ENCODE measurements at regions of chr12 and their contacts with region 1.

Region 1: GRCh38 chr12:48851883-48852733 is at the start of gene DDX23:
- DNase-seq: peak; percentile 93
- ATAC-seq: peak; percentile 99
- H3K4me3 Mint-ChIP-seq: peak within 1 kb of the TSS; percentile 94
- H3K27ac Mint-ChIP-seq: peak within 1 kb of the TSS; percentile 95
- H3K4me1 Mint-ChIP-seq: peaks cover 20% of the 10 kb centered on the region
- H3K27me3 Mint-ChIP-seq: no peaks in the 10 kb centered on the region
- CTCF ChIP-seq: no peak
- total RNA-seq, gene DDX23: 91.1 to 107 TPM (median 93.4 TPM) in 3 replicates

Region 2: GRCh38 chr12:48712209-48712608 is 139.9 kb before region 1 on chr12:
- CTCF ChIA-PET with region 1: no interaction called
- POLR2A ChIA-PET with region 1: no interaction called
- DNase-seq: no peak
- ATAC-seq: no peak
- H3K4me3 Mint-ChIP-seq: no peak overlapping the region
- H3K27ac Mint-ChIP-seq: no peak overlapping the region
- H3K4me1 Mint-ChIP-seq: peaks cover 12% of the 10 kb centered on the region
- H3K27me3 Mint-ChIP-seq: no peaks in the 10 kb centered on the region
- CTCF ChIP-seq: no peak

Region 3: GRCh38 chr12:48814262-48815125 is 37.6 kb before region 1 on chr12:
- CTCF ChIA-PET with region 1: interaction called, 25 read pairs
- POLR2A ChIA-PET with region 1: interaction called, 3 read pairs
- DNase-seq: peak; percentile 81
- ATAC-seq: peak; percentile 25
- H3K4me3 Mint-ChIP-seq: peak overlapping the region; percentile 87
- H3K27ac Mint-ChIP-seq: no peak overlapping the region
- H3K4me1 Mint-ChIP-seq: peaks cover 45% of the 10 kb centered on the region
- H3K27me3 Mint-ChIP-seq: peaks cover 69% of the 10 kb centered on the region
- CTCF ChIP-seq: peak; percentile 92

Region 4: DNA sequence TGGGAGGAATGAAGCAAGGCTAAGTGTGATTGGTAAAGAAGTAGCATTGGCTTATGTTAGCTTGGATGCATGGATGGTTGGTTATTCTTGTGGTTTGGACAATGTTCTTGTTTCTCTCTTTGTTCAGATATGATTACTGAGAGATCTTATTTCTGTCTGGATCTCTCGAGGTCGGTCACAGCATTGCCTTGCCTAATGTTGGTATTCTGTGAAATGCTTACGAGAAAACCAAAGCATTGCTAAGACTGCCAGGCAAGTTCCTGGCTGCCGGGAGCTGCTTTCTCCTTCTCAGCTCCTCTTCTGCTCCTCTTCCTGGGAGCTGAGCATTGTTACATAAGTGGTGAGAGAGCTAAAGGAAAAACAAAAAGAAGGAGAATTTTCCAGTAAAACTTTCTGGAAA is 21.0 kb after region 1 on chr12:
- CTCF ChIA-PET with region 1: interaction called, 134 read pairs
- POLR2A ChIA-PET with region 1: interaction called, 4 read pairs
- DNase-seq: no peak
- ATAC-seq: no peak
- H3K4me3 Mint-ChIP-seq: no peak overlapping the region
- H3K27ac Mint-ChIP-seq: no peak overlapping the region
- H3K4me1 Mint-ChIP-seq: no peaks in the 10 kb centered on the region
- H3K27me3 Mint-ChIP-seq: no peaks in the 10 kb centered on the region; the same call in 1 of the 2 replicates
- CTCF ChIP-seq: no peak

Region 5: DNA sequence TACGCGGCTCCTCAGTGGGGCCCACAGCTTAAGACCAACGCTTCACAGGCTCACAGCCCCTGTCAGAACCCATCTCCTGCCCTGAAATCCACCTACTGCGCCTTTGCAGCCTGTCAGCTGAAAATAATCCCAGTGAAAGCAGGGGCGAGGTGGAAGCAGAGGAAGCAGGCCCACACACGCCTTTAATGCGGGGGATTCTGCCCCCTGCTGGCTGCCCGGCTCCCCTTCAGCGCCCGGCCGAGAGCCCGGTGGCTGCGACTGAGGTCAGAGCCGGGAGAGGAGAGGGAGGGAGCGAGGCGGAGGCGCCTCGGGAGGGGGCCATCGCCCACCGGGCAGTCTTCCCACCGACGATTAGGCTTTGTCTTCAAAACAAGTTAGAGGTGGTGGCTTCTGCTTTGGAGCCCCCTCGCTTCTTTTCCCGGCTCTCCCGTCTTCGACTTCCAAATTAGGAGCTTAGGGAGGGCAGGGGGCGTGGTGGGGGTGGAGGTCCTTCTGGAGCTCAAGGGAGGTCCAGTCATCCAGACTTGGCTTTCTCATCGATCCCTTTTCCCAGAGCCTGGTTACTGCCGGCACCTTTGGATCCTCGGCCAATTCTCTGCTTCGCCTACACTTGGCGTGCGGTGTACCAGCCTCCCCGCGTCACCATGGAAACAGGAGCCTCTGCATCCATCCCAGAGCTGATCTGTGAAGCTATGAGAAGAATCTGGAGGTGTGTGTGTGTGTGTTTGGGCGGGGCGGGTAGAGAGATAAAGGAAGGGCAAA is 38.7 kb after region 1 on chr12:
- CTCF ChIA-PET with region 1: interaction called, 352 read pairs
- POLR2A ChIA-PET with region 1: interaction called, 20 read pairs
- DNase-seq: peak; percentile 92
- ATAC-seq: peak; percentile 95
- H3K4me3 Mint-ChIP-seq: peak overlapping the region; percentile 70
- H3K27ac Mint-ChIP-seq: no peak overlapping the region
- H3K4me1 Mint-ChIP-seq: peaks cover 7% of the 10 kb centered on the region
- H3K27me3 Mint-ChIP-seq: peaks cover 28% of the 10 kb centered on the region
- CTCF ChIP-seq: peak; percentile 92

Region 6: GRCh38 chr12:48924617-48925303 is 72.7 kb after region 1 on chr12:
- CTCF ChIA-PET with region 1: interaction called, 35 read pairs
- POLR2A ChIA-PET with region 1: interaction called, 4 read pairs
- DNase-seq: peak; percentile 69
- ATAC-seq: peak; percentile 69
- H3K4me3 Mint-ChIP-seq: peak overlapping the region; percentile 82
- H3K27ac Mint-ChIP-seq: peak overlapping the region; percentile 80
- H3K4me1 Mint-ChIP-seq: peaks cover 15% of the 10 kb centered on the region
- H3K27me3 Mint-ChIP-seq: no peaks in the 10 kb centered on the region; the same call in 1 of the 2 replicates
- CTCF ChIP-seq: 0 out of 2 replicates have a peak, but pooled peaks have one; percentile 15

Region 7: DNA sequence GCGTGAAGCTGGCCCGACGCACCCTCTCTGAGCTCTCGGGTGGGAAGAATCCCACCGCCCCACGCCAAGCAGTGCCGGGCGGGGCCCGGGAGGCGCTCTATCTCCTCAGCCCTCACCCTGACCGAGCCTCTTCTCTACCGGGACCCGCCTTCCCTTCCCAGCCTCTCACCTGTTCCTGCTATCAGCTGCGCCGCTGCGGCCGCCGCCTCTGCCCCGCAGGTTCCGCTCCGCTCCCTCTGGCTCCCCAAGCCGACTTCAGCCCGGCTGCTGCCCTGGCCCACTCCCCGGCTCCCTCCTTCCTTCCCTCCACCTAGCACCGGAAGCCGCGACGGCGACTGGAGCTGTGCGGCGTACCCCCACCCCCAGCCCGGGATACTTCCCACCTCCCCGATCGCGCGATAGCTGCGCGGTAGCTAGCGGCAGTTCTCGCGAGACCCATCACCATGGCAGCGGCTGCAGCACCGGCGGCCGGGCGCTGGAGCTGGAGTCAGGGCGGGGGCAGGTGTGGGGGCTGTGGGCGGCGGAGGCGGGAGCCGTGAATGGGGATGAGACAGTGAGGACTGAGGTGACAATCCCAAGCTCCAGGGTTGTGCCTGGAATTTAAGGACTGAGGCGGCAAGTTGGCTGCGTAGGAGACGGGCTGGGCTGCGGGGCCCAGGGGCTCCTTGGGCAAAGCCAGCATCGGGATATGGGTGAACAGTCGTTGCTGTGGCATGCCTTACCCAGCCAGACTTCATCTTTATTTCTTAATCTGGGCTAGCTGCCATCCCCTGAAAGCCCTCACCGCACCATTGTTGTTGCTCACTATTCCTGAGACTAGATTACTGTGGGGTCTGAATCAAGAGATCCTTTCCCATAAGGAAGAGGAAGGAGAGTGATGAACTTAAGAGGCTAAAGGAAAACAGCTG is 105.3 kb after region 1 on chr12 and contains the start of gene ARF3:
- CTCF ChIA-PET with region 1: interaction called, 23 read pairs
- POLR2A ChIA-PET with region 1: interaction called, 7 read pairs
- DNase-seq: peak; percentile 98
- ATAC-seq: peak; percentile 89
- H3K4me3 Mint-ChIP-seq: peak within 1 kb of the TSS; percentile 95
- H3K27ac Mint-ChIP-seq: peak within 1 kb of the TSS; percentile 97
- H3K4me1 Mint-ChIP-seq: peaks cover 31% of the 10 kb centered on the region
- H3K27me3 Mint-ChIP-seq: peaks cover 7% of the 10 kb centered on the region; the same call in 1 of the 2 replicates
- CTCF ChIP-seq: no peak
- total RNA-seq, gene ARF3: 238 to 256 TPM (median 248 TPM) in 3 replicates

Region 8: DNA sequence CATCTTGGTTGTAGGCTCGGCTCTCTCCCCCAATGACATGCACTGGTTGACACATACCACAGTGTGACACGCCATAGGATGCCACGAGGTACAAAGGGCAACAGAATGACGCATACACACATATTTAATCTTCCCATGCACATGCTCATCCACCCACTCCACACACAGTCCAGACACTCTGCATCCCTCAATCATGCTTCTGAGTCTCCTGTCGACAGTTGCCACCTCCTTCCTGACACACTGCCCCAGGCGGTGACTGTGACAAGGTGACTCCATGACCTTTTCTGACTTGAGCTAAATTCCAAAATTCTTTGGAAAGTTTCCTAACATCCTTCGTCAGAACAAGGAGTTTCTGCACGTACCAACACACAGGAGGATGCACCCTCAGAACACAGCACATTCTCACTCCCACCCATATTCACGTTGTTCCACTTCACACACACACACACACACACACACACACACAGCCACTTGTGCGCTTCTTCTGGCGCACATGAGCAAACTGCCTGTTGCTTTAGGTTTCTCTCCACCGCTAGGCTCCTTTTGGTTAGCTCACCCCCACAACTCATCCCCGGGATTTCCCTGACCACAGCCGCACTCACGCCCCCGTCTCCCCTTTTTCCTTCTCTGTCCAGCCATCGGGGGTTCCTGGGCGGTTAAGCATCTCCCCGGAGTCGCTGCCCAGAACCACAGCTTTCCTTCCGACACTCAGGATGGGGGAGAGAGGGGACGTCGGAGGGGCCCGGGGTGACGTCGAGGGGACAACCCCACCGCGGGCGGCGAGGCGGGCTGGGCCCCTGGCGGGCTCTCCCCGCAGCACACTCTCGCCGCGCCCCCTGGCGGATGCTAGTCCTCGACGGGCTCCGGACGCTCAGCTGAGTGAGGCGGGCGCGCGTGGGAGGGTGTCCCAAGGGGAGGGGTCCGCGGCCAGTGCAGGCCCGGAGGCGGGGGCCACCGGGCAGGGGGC is 125.5 kb after region 1 on chr12:
- CTCF ChIA-PET with region 1: interaction called, 10 read pairs
- POLR2A ChIA-PET with region 1: no interaction called
- DNase-seq: peak; percentile 75
- ATAC-seq: peak; percentile 3
- H3K4me3 Mint-ChIP-seq: peak overlapping the region; percentile 45
- H3K27ac Mint-ChIP-seq: no peak overlapping the region
- H3K4me1 Mint-ChIP-seq: peaks cover 31% of the 10 kb centered on the region
- H3K27me3 Mint-ChIP-seq: peaks cover 100% of the 10 kb centered on the region
- CTCF ChIP-seq: peak; percentile 77; the same call in 1 of the 2 replicates